HCT116 (cell line): ENCODE measurements at regions of chr6 and their contacts with region 1.

Region 1: GRCh38 chr6:137313928-137314855 is 95.0 kb upstream of the IFNGR1 start:
- DNase-seq: peak; percentile 46
- ATAC-seq: peak; percentile 90
- H3K4me3 ChIP-seq: no peak overlapping the region
- H3K27ac ChIP-seq: no peak overlapping the region
- H3K4me1 ChIP-seq: peaks cover 4% of the 10 kb centered on the region in 2 experiments
- H3K27me3 ChIP-seq: no peaks in the 10 kb centered on the region
- CTCF ChIP-seq: peak; percentile 74 to 92 (median 77)
- POLR2A ChIP-seq: no peak
- RAD21 ChIP-seq: peak; percentile 83

Region 2: GRCh38 chr6:137076277-137077068 is 237.7 kb before region 1 on chr6:
- CTCF ChIA-PET with region 1: interaction called, 12 read pairs
- POLR2A ChIA-PET with region 1: no interaction called
- RAD21 ChIA-PET with region 1: no interaction called
- intact Hi-C with region 1: loop called (anchors 5 kb)
- DNase-seq: peak; percentile 82
- ATAC-seq: peak; percentile 100
- H3K4me3 ChIP-seq: no peak overlapping the region
- H3K27ac ChIP-seq: no peak overlapping the region
- H3K4me1 ChIP-seq: no peaks in the 10 kb centered on the region
- H3K27me3 ChIP-seq: no peaks in the 10 kb centered on the region
- CTCF ChIP-seq: peak; percentile 73 to 94 (median 90)
- POLR2A ChIP-seq: no peak
- RAD21 ChIP-seq: peak; percentile 92

Region 3: GRCh38 chr6:137094411-137095008 is 219.7 kb before region 1 on chr6:
- CTCF ChIA-PET with region 1: interaction called, 33 read pairs
- POLR2A ChIA-PET with region 1: no interaction called
- RAD21 ChIA-PET with region 1: interaction called in 1 of 2 experiments, 5 read pairs
- intact Hi-C with region 1: loop called (anchors 1 kb)
- DNase-seq: peak; percentile 56
- ATAC-seq: peak; percentile 88
- H3K4me3 ChIP-seq: no peak overlapping the region
- H3K27ac ChIP-seq: no peak overlapping the region
- H3K4me1 ChIP-seq: peaks cover 0 to 3% of the 10 kb centered on the region in 2 experiments; a peak in 2 of 4 replicates
- H3K27me3 ChIP-seq: no peaks in the 10 kb centered on the region
- CTCF ChIP-seq: peak; percentile 62 to 87 (median 84)
- POLR2A ChIP-seq: no peak
- RAD21 ChIP-seq: peak; percentile 87

Region 4: GRCh38 chr6:137271245-137272183 is 42.7 kb before region 1 on chr6:
- CTCF ChIA-PET with region 1: interaction called, 28 read pairs
- POLR2A ChIA-PET with region 1: no interaction called
- RAD21 ChIA-PET with region 1: interaction called, 5 to 9 read pairs
- intact Hi-C with region 1: loop called (anchors 1 kb)
- DNase-seq: peak; percentile 65
- ATAC-seq: peak; percentile 84
- H3K4me3 ChIP-seq: no peak overlapping the region
- H3K27ac ChIP-seq: no peak overlapping the region
- H3K4me1 ChIP-seq: no peaks in the 10 kb centered on the region
- H3K27me3 ChIP-seq: no peaks in the 10 kb centered on the region
- CTCF ChIP-seq: peak; percentile 82 to 90 (median 85); a peak in 5 of 6 replicates
- POLR2A ChIP-seq: no peak
- RAD21 ChIP-seq: peak; percentile 87